SK-N-SH (cell line): ENCODE measurements at regions of chr10 and their contacts with region 1.

Region 1: DNA sequence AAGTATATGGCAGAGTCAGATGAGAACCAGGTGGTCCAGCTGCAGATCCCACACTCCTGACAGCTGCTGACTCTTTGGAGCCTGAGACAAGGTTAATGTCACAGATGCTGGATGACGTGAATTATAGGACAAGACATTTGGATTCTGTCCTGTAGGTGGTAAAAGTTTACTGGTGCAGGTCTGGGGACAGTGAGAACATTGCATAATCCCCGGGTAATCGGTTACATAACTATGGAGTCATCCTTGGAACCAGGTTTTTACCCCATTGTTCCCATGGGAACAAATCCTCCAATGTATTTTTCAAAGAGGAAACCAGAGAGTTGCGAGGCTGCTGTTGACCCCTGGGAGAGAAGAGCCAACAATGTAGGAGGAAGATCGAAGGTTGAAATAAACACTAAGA is 27.5 kb upstream of the ZCCHC24 start:
- DNase-seq: no peak
- H3K4me3 ChIP-seq: no peak overlapping the region
- H3K27ac ChIP-seq: no peak overlapping the region
- H3K4me1 ChIP-seq: no peaks in the 10 kb centered on the region
- H3K27me3 ChIP-seq: no peaks in the 10 kb centered on the region
- CTCF ChIP-seq: no peak
- EP300 ChIP-seq: no peak
- RAD21 ChIP-seq: no peak

Region 2: GRCh38 chr10:78520737-78521430 is 952.1 kb before region 1 on chr10:
- CTCF ChIA-PET with region 1: no interaction called
- POLR2A ChIA-PET with region 1: no interaction called
- DNase-seq: no peak
- H3K4me3 ChIP-seq: no peak overlapping the region
- H3K27ac ChIP-seq: peak overlapping the region in 1 of 2 experiments; percentile 68; a peak in 2 of 4 replicates
- H3K4me1 ChIP-seq: peaks cover 5 to 35% of the 10 kb centered on the region in 2 experiments; a peak in 3 of 4 replicates
- H3K27me3 ChIP-seq: no peaks in the 10 kb centered on the region
- CTCF ChIP-seq: peak; percentile 48
- EP300 ChIP-seq: no peak
- RAD21 ChIP-seq: peak; percentile 45

Region 3: GRCh38 chr10:79381804-79382221 is 91.1 kb before region 1 on chr10:
- CTCF ChIA-PET with region 1: interaction called, 75 read pairs
- POLR2A ChIA-PET with region 1: no interaction called
- DNase-seq: no peak
- H3K4me3 ChIP-seq: no peak overlapping the region
- H3K27ac ChIP-seq: peak overlapping the region in 1 of 2 experiments; percentile 65; a peak in 2 of 4 replicates
- H3K4me1 ChIP-seq: peaks cover 4 to 9% of the 10 kb centered on the region in 2 experiments; a peak in 1 of 4 replicates
- H3K27me3 ChIP-seq: no peaks in the 10 kb centered on the region
- CTCF ChIP-seq: no peak
- EP300 ChIP-seq: no peak; a peak in 1 of 4 replicates
- RAD21 ChIP-seq: no peak

Region 4: GRCh38 chr10:79390551-79391209 is 82.3 kb before region 1 on chr10:
- CTCF ChIA-PET with region 1: interaction called, 34 read pairs
- POLR2A ChIA-PET with region 1: no interaction called
- DNase-seq: peak; percentile 32
- H3K4me3 ChIP-seq: no peak overlapping the region
- H3K27ac ChIP-seq: no peak overlapping the region
- H3K4me1 ChIP-seq: peaks cover 0 to 20% of the 10 kb centered on the region in 2 experiments; a peak in 1 of 4 replicates
- H3K27me3 ChIP-seq: no peaks in the 10 kb centered on the region
- CTCF ChIP-seq: no peak
- EP300 ChIP-seq: no peak
- RAD21 ChIP-seq: no peak

Region 5: DNA sequence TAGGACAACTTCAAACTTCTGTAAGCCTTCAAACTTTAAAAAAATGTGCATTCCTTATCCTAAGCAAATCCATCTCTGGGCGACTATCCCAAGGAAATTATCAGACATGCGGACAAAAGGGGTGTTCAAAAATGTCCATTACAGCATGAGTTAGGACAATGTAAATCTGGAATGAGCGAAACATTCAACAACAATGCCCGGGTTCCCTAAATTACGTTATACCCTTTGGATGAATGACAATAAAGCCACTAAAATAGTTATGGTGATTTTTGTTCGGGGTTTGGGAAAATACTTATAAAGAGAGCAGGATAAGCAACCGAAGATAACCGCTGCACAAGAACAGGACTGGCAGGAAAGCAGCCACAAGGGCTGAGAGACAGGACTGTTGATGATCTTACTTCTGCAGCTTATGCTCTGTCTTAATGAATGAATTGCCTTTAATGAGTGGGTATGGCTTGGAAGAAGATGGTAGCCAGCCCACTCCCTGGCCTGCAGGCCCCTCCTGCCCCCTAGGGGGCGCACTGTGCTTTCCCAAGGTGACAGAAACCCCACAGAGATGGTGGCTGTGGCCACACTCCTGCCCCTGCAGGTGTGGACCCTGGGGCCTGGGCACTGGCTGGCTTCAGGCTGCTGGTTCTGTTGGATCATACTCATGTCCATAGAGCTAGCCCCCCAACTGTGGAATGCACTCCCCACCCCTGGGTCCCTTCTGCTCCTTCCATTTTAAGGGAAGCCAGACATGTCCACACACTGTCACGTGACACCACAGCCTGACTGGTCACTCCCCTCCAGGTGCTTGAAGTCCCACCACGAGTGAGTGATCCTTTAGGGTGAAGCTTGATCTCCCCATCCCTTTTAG is 72.6 kb before region 1 on chr10:
- CTCF ChIA-PET with region 1: interaction called, 13 read pairs
- POLR2A ChIA-PET with region 1: no interaction called
- DNase-seq: peak; percentile 78
- H3K4me3 ChIP-seq: peak overlapping the region in 1 of 2 experiments; percentile 26; a peak in 2 of 4 replicates
- H3K27ac ChIP-seq: peak overlapping the region; percentile 96
- H3K4me1 ChIP-seq: peaks cover 25 to 84% of the 10 kb centered on the region in 2 experiments
- H3K27me3 ChIP-seq: no peaks in the 10 kb centered on the region
- CTCF ChIP-seq: peak; percentile 80
- EP300 ChIP-seq: no peak
- RAD21 ChIP-seq: peak; percentile 71

Region 6: GRCh38 chr10:79459243-79459642 is 13.7 kb before region 1 on chr10:
- CTCF ChIA-PET with region 1: interaction called, 10 read pairs
- POLR2A ChIA-PET with region 1: no interaction called
- DNase-seq: no peak
- H3K4me3 ChIP-seq: no peak overlapping the region
- H3K27ac ChIP-seq: no peak overlapping the region
- H3K4me1 ChIP-seq: peaks cover 0 to 6% of the 10 kb centered on the region in 2 experiments; a peak in 1 of 4 replicates
- H3K27me3 ChIP-seq: no peaks in the 10 kb centered on the region; the same call in 1 of the 2 replicates
- CTCF ChIP-seq: no peak
- EP300 ChIP-seq: no peak
- RAD21 ChIP-seq: no peak

Region 7: GRCh38 chr10:79487296-79488194 is 14.6 kb after region 1 on chr10:
- CTCF ChIA-PET with region 1: interaction called, 14 read pairs
- POLR2A ChIA-PET with region 1: no interaction called
- DNase-seq: peak; percentile 77
- H3K4me3 ChIP-seq: no peak overlapping the region; a peak in 1 of 4 replicates
- H3K27ac ChIP-seq: peak overlapping the region; percentile 89 to 91
- H3K4me1 ChIP-seq: peaks cover 27 to 34% of the 10 kb centered on the region in 2 experiments
- H3K27me3 ChIP-seq: no peaks in the 10 kb centered on the region
- CTCF ChIP-seq: peak; percentile 73
- EP300 ChIP-seq: no peak
- RAD21 ChIP-seq: peak; percentile 78